HCT116 (cell line): ENCODE measurements at regions of chr6 and their contacts with region 1.

Region 1: DNA sequence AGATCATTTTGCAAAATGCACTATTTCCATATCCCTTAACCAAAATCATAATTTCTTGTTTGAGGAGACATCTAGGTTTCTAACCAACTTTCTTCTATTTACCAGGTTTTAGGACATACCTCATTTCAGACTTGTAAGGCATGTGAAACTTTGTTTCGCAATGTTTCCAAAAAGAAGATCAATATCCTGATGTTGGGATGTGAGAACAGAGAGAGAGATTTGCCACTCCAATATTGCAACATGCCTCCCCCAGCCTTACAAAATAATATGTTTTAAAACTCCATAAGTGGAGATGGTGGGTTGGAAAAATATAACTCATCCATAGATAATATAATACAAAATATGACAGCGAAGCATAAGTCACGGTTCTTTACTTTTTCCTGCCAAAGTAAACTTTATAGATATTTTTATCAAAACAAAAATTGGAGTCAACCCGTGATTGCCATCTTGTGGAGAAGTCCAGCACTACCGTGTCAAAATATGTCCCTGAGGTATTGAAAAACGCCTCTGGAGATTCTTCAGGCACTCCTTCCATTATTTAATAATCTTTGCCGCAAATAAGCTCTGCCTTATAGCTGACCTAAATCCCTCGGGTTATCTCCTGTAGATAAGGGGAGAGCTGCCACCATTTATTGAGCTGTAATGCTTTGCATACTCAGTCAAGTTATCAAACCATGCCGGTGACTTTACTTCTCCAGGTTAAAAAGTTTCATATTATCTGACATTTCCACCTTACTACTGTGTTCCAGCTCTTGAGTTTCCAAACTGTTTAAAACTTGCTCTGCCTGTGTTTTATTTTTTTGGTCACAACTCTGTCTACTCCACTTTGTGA is 534.2 kb downstream of the HACE1 start:
- DNase-seq: peak; percentile 22
- ATAC-seq: peak; percentile 55
- H3K4me3 ChIP-seq: no peak overlapping the region
- H3K27ac ChIP-seq: no peak overlapping the region
- H3K4me1 ChIP-seq: no peaks in the 10 kb centered on the region
- H3K27me3 ChIP-seq: no peaks in the 10 kb centered on the region
- CTCF ChIP-seq: peak; percentile 39 to 70 (median 66); a peak in 5 of 6 replicates
- POLR2A ChIP-seq: no peak
- RAD21 ChIP-seq: peak; percentile 56

Region 2: GRCh38 chr6:104003803-104004516 is 321.6 kb before region 1 on chr6:
- CTCF ChIA-PET with region 1: no interaction called
- POLR2A ChIA-PET with region 1: no interaction called
- RAD21 ChIA-PET with region 1: no interaction called
- intact Hi-C with region 1: loop called (anchors 1 kb)
- DNase-seq: no peak
- ATAC-seq: peak; percentile 54; the same call in 1 of the 2 replicates
- H3K4me3 ChIP-seq: no peak overlapping the region
- H3K27ac ChIP-seq: no peak overlapping the region
- H3K4me1 ChIP-seq: no peaks in the 10 kb centered on the region
- H3K27me3 ChIP-seq: no peaks in the 10 kb centered on the region
- CTCF ChIP-seq: peak; percentile 13 to 54 (median 28); a peak in 3 of 6 replicates
- POLR2A ChIP-seq: no peak
- RAD21 ChIP-seq: no peak

Region 3: DNA sequence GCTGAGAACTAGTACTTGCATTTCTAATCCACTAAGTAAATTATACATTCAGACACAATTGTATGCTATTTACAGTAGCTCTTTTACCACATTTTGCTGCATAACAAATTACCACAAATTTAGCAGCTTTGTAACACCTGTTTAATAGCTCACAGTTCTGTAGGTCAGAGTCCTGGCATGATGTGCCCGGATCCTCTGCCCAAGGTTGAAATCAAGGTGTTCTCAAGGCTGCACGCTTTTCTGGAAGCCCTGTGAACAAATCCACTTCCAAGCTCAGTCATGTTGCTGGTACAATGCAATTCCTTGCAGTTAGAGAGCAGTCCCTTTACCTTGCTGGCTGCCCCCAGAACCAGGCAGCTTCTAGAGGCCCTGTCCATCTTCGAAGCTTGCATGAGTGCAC is 181.8 kb before region 1 on chr6:
- CTCF ChIA-PET with region 1: no interaction called
- POLR2A ChIA-PET with region 1: no interaction called
- RAD21 ChIA-PET with region 1: no interaction called
- intact Hi-C with region 1: no loop called
- DNase-seq: no peak
- ATAC-seq: no peak
- H3K4me3 ChIP-seq: no peak overlapping the region
- H3K27ac ChIP-seq: no peak overlapping the region
- H3K4me1 ChIP-seq: no peaks in the 10 kb centered on the region
- H3K27me3 ChIP-seq: no peaks in the 10 kb centered on the region
- CTCF ChIP-seq: no peak
- POLR2A ChIP-seq: no peak
- RAD21 ChIP-seq: no peak

Region 4: DNA sequence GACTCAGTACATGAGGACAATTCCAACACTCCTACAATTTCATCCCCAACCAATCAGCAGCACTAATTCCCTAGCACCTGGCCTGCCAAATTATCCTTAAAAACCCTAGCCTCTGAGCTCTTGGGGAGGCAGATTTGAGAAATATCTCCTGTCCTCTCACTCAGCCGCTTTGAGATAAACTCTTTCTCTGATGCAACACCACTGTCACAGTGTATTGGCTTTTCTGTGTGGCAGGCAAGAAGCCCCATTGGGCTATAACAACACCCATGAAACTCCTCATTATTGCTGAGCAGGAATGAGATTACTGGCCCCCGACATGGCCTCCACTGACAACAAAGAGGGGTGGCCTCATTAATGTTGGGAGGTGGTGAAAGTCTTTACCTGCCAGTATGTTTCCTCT is 18.7 kb after region 1 on chr6:
- CTCF ChIA-PET with region 1: no interaction called
- POLR2A ChIA-PET with region 1: no interaction called
- RAD21 ChIA-PET with region 1: no interaction called
- intact Hi-C with region 1: no loop called
- DNase-seq: no peak
- ATAC-seq: no peak
- H3K4me3 ChIP-seq: no peak overlapping the region
- H3K27ac ChIP-seq: no peak overlapping the region
- H3K4me1 ChIP-seq: no peaks in the 10 kb centered on the region
- H3K27me3 ChIP-seq: no peaks in the 10 kb centered on the region
- CTCF ChIP-seq: no peak
- POLR2A ChIP-seq: no peak
- RAD21 ChIP-seq: no peak

Region 5: DNA sequence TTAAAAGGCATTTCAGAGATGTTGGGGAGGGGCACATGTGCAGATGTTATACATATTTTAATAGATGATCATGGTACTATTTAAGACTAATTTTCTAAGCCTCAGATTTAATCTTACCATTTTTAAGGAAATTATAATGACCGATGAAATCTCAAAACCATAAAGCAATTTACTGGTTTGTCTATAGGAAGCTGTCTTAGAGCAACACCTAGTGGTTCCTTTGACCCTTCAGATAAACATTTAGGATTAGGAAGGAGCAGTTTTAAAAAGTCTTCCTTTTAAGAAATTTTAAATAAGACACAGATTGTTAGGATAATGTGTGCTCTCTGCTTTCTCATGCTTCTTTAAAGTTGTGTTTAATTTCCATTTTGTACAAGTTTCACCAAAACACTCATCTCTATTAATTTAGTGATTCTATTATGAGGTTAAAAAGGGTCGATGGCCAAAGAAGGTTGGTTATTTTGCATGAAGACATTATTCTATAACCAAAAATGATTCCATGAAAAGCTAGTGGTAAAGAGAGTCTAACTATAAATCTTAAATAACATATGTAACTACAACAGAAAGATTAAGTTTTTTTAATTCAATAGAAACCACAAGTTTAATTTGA is 157.8 kb after region 1 on chr6:
- CTCF ChIA-PET with region 1: interaction called, 3 read pairs
- POLR2A ChIA-PET with region 1: no interaction called
- RAD21 ChIA-PET with region 1: no interaction called
- intact Hi-C with region 1: loop called (anchors 5 kb)
- DNase-seq: peak; percentile 15
- ATAC-seq: no peak
- H3K4me3 ChIP-seq: no peak overlapping the region
- H3K27ac ChIP-seq: no peak overlapping the region
- H3K4me1 ChIP-seq: no peaks in the 10 kb centered on the region
- H3K27me3 ChIP-seq: no peaks in the 10 kb centered on the region
- CTCF ChIP-seq: peak; percentile 17 to 56 (median 42); a peak in 3 of 6 replicates
- POLR2A ChIP-seq: no peak
- RAD21 ChIP-seq: peak; percentile 58

Region 6: GRCh38 chr6:104754788-104755409 is 429.3 kb after region 1 on chr6:
- CTCF ChIA-PET with region 1: no interaction called
- POLR2A ChIA-PET with region 1: no interaction called
- RAD21 ChIA-PET with region 1: no interaction called
- intact Hi-C with region 1: no loop called
- DNase-seq: no peak
- ATAC-seq: no peak
- H3K4me3 ChIP-seq: no peak overlapping the region
- H3K27ac ChIP-seq: no peak overlapping the region
- H3K4me1 ChIP-seq: no peaks in the 10 kb centered on the region
- H3K27me3 ChIP-seq: no peaks in the 10 kb centered on the region
- CTCF ChIP-seq: no peak
- POLR2A ChIP-seq: no peak
- RAD21 ChIP-seq: no peak